ENCODE measurements at regions of chrX and their contacts with region 1.

Region 1: DNA sequence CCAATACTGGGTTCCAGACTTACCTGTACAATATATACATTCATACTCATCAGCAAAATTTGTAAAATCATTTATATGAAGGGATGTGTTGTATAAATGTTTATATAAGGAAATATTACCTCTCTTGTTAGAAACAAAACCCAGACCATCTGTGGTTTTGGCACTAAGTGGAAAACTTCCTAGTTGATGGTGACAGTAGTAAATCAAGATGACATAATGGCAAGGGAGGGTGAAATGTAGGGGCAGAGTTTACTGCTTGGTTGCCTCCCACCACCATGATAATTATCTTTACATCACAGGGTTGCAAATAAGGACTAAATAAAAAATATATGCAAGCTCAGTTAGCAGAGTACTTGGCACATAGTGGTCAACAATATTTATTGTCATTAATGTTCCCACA is 365.3 kb upstream of the TEX13C start:
- DNase-seq: no peak
- H3K4me3 ChIP-seq: no peak overlapping the region
- H3K27ac ChIP-seq: no peak overlapping the region
- H3K4me1 ChIP-seq: no peaks in the 10 kb centered on the region
- H3K27me3 ChIP-seq: no peaks in the 10 kb centered on the region
- CTCF ChIP-seq: no peak

Region 2: GRCh38 chrX:124679199-124679598 is 275.2 kb before region 1 on chrX:
- CTCF ChIA-PET with region 1: no interaction called
- POLR2A ChIA-PET with region 1: no interaction called
- intact Hi-C with region 1: no loop called
- DNase-seq: no peak
- H3K4me3 ChIP-seq: no peak overlapping the region
- H3K27ac ChIP-seq: no peak overlapping the region
- H3K4me1 ChIP-seq: no peaks in the 10 kb centered on the region
- H3K27me3 ChIP-seq: no peaks in the 10 kb centered on the region
- CTCF ChIP-seq: no peak

Region 3: GRCh38 chrX:124820738-124821137 is 133.7 kb before region 1 on chrX:
- CTCF ChIA-PET with region 1: interaction called, 19 read pairs
- POLR2A ChIA-PET with region 1: no interaction called
- intact Hi-C with region 1: no loop called
- DNase-seq: no peak
- H3K4me3 ChIP-seq: no peak overlapping the region
- H3K27ac ChIP-seq: no peak overlapping the region
- H3K4me1 ChIP-seq: no peaks in the 10 kb centered on the region
- H3K27me3 ChIP-seq: no peaks in the 10 kb centered on the region
- CTCF ChIP-seq: no peak

Region 4: GRCh38 chrX:124975456-124975855 is 21.1 kb after region 1 on chrX:
- CTCF ChIA-PET with region 1: no interaction called
- POLR2A ChIA-PET with region 1: no interaction called
- intact Hi-C with region 1: no loop called
- DNase-seq: no peak
- H3K4me3 ChIP-seq: no peak overlapping the region
- H3K27ac ChIP-seq: no peak overlapping the region
- H3K4me1 ChIP-seq: no peaks in the 10 kb centered on the region
- H3K27me3 ChIP-seq: no peaks in the 10 kb centered on the region
- CTCF ChIP-seq: no peak

Region 5: DNA sequence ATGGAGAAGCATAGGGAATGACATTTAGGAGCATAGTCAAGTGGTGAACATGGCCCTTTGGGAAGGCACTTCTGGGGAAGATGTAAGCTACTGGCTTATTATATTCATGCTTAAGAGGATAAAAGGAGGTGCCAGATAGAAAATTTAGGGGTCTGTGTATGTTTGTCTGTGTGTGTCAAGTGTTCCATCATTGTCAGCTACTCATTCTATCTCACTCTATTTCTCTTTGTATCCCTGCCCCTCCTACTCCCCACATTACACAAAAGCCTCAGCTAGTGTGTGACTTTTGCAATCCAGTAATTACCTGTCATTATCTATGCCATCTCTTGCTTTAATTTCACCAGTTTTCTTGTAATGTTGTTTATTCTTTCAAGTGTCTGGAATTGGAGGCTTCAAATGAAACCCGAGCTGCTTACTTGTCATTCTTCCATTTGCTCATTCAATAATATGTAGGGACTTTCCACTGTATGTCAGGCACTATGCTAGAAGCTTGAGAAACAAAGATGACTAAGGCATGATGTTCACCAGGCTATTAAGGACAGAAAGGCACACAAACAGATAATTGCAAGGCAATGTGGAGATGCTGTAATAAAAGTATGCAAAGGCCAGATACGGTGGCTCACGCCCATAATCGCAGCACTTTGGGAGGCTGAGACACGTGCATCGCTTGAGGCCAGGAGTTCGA is 135.5 kb after region 1 on chrX:
- CTCF ChIA-PET with region 1: no interaction called
- POLR2A ChIA-PET with region 1: no interaction called
- intact Hi-C with region 1: no loop called
- DNase-seq: peak in 1 of 2 experiments; percentile 76
- H3K4me3 ChIP-seq: no peak overlapping the region
- H3K27ac ChIP-seq: peak overlapping the region; percentile 38
- H3K4me1 ChIP-seq: no peaks in the 10 kb centered on the region
- H3K27me3 ChIP-seq: no peaks in the 10 kb centered on the region
- CTCF ChIP-seq: no peak

Measured in PC-9 (cell line).